CD14-positive monocyte (primary cell): ENCODE measurements at regions of chr11 and their contacts with region 1.

Region 1: GRCh38 chr11:64436000-64436399 is 77.0 kb downstream of the RPS6KA4 start:
- DNase-seq: no peak
- H3K4me3 ChIP-seq: no peak overlapping the region
- H3K4me3 Mint-ChIP-seq: no peak overlapping the region
- H3K27ac ChIP-seq: no peak overlapping the region
- H3K27ac Mint-ChIP-seq: no peak overlapping the region
- H3K4me1 ChIP-seq: peaks cover 28 to 29% of the 10 kb centered on the region in 2 donors
- H3K4me1 Mint-ChIP-seq: peaks cover 47% of the 10 kb centered on the region
- H3K27me3 ChIP-seq: no peaks in the 10 kb centered on the region
- H3K27me3 Mint-ChIP-seq: peaks cover 1 to 5% (median 5%) of the 10 kb centered on the region in 3 donors
- CTCF ChIP-seq: no peak

Region 2: GRCh38 chr11:64240394-64241174 is 195.4 kb before region 1 on chr11 and contains the start of gene FKBP2:
- intact Hi-C with region 1: no loop called
- DNase-seq: peak; percentile 98 to 99 (median 99)
- H3K4me3 ChIP-seq: peak within 1 kb of the TSS; percentile 54 to 84 (median 81)
- H3K4me3 Mint-ChIP-seq: peak within 1 kb of the TSS; percentile 87 to 92
- H3K27ac ChIP-seq: peak within 1 kb of the TSS; percentile 96 to 100
- H3K27ac Mint-ChIP-seq: peak within 1 kb of the TSS; percentile 100
- H3K4me1 ChIP-seq: peaks cover 61 to 75% of the 10 kb centered on the region in 2 donors
- H3K4me1 Mint-ChIP-seq: peaks cover 57% of the 10 kb centered on the region
- H3K27me3 ChIP-seq: no peaks in the 10 kb centered on the region
- H3K27me3 Mint-ChIP-seq: peaks cover 0 to 6% (median under 1%) of the 10 kb centered on the region in 3 donors
- CTCF ChIP-seq: no peak
- polyA plus RNA-seq, gene FKBP2: 38.9 to 80.7 (median 71.1) TPM

Region 3: DNA sequence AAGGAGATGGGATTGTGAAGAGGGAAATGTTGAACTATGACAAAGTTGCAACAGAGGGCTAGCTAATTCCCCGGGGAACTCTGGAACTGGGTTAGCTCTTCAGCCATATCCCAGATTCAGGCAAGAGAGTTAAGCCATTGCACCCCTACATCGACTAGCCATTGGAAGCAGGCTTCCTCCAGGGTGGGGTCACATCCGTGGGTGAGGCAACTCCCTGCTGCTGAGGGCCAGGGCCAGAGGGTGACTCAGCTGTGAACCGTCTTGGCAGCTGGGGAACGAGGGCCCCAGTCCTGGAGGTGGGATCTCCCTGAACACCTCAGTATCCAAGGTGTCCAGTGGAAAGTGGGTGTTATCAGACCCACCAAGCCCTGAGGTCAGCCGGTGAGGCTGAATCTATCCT is 35.9 kb before region 1 on chr11:
- intact Hi-C with region 1: loop called in 1 of 2 experiments (anchors 5 kb)
- DNase-seq: peak; percentile 60 to 83 (median 78)
- H3K4me3 ChIP-seq: peak overlapping the region in 1 of 3 experiments; percentile 27
- H3K4me3 Mint-ChIP-seq: peak overlapping the region in 1 of 2 donors; percentile 49
- H3K27ac ChIP-seq: peak overlapping the region in 1 of 2 donors; percentile 70
- H3K27ac Mint-ChIP-seq: peak overlapping the region; percentile 41 to 86 (median 79)
- H3K4me1 ChIP-seq: peaks cover 59 to 71% of the 10 kb centered on the region in 2 donors
- H3K4me1 Mint-ChIP-seq: peaks cover 77% of the 10 kb centered on the region
- H3K27me3 ChIP-seq: no peaks in the 10 kb centered on the region
- H3K27me3 Mint-ChIP-seq: peaks cover 0 to 2% (median 1%) of the 10 kb centered on the region in 3 donors
- CTCF ChIP-seq: no peak